Right lobe of liver (tissue), 6 donors: ENCODE measurements at regions of chr11 and their contacts with region 1.

Region 1: GRCh38 chr11:47642099-47642855 is at the start of gene MTCH2:
- DNase-seq: peak; percentile 96 to 97 (median 97)
- ATAC-seq: peak; percentile 92 to 97 (median 93)
- H3K4me3 ChIP-seq: peak within 1 kb of the TSS; percentile 83 to 99 (median 98)
- H3K27ac ChIP-seq: peak within 1 kb of the TSS; percentile 96 to 99 (median 98)
- H3K4me1 ChIP-seq: peaks cover 0 to 25% (median 7%) of the 10 kb centered on the region in 4 donors
- H3K27me3 ChIP-seq: no peaks in the 10 kb centered on the region
- CTCF ChIP-seq: peak; percentile 27 to 52 (median 38)
- POLR2A ChIP-seq: peak; percentile 90
- total RNA-seq, gene MTCH2: 123 to 179 (median 135) TPM

Region 2: DNA sequence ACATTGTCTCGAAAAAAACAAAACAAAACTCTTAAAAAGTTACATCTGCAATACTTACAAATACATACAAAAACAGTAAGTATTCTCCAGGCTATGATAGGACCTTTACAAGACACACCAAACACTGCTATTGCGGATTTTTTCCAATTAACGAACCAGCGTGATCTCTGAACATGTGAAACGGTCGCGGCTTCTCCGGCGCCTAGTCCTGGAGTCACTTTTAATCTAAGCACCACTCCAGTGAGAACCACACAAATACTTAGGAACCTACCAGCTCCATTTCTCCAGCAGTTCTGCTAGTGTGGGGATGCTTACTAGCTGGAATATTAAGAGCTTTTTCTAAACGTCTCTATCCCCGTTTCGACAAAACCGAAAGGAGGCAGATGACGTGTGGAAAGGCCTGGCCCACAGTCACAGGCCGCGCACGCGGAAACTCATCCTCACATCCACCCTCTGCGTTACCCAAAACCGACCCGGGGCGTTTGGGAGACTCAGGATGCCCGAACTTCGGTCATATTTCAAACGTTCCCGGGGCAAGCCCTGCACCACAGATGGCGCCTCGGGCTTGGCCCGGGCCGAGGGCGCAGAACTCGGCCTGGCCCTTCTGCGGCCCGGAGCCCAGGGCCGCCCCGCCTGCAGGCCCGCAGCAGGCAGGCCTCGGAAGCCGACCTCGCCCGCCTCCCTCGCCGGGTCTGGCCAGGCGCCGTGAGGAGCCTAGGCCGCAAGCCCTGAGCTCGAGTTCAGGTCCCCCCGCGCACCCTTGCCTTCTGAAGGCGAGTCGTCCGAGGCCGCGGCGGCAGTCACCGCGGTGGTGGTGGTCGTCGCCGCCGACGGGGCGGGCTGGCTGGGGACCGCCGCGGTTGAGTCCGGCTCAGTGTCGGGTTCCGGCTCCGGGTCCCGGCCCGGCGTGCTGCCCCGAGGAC is 124.3 kb after region 1 on chr11:
- intact Hi-C with region 1: loop called in 1 of 2 experiments (anchors 10 kb)
- DNase-seq: peak; percentile 76 to 82 (median 79)
- ATAC-seq: peak; percentile 39 to 58 (median 46)
- H3K4me3 ChIP-seq: peak overlapping the region; percentile 88 to 92 (median 88)
- H3K27ac ChIP-seq: peak overlapping the region; percentile 95 to 98 (median 98)
- H3K4me1 ChIP-seq: peaks cover 0 to 8% (median 3%) of the 10 kb centered on the region in 4 donors
- H3K27me3 ChIP-seq: no peaks in the 10 kb centered on the region
- CTCF ChIP-seq: no peak
- POLR2A ChIP-seq: no peak